ENCODE measurements at regions of chr5 and their contacts with region 1.

Region 1: DNA sequence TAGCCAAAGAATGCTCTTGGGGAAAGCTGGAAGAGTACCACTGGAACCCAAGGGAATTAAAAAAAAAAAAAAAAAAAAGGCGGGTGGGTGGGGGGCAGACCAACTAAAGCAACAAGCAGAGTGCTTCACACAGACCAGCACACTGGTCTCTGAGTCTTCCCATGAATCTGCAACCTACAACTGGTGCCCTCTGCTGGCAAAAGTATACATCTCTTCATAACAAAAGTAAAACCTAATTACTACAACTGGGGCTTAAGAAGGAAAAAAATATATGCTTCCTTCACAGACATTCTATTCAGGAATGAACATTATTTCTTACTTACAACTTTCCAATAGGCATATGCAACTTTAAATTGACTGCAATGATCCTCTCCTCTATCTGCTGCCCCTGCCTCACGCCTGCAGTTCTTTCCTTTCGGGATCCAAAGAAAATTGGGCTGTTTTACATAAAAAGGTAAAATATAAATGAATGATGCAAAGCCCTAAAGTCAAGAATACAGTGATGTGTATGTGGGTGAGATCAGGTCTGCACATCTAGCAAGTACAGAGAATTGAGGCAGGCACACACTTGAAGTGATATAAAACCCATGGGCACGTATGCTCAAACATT is 7.2 kb upstream of the KLHL3 start:
- DNase-seq: no peak
- H3K4me3 ChIP-seq: no peak overlapping the region
- H3K27ac ChIP-seq: no peak overlapping the region
- H3K27me3 ChIP-seq: no peaks in the 10 kb centered on the region
- CTCF ChIP-seq: peak; percentile 75

Region 2: DNA sequence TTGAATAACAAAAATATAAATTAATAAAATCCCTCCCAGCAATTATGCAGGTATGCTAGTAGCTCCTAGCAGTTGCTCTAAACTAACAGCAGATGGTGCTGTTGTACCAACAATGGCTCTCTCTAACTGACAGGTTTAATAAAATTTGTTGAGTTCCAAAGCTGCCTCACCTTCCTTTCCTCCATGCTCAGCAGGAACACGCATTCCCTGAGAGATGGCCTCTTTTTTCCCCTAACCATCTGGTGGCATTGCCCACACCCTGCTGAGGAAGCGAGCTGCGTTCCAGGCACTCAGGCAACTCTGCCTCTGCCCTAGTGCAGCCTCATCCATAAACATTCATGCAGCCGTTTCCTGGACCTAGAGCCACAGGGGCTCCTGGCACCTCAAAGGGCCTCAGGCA is 113.5 kb before region 1 on chr5:
- CTCF ChIA-PET with region 1: interaction called, 271 read pairs
- POLR2A ChIA-PET with region 1: no interaction called
- DNase-seq: no peak
- H3K4me3 ChIP-seq: no peak overlapping the region
- H3K27ac ChIP-seq: no peak overlapping the region
- H3K27me3 ChIP-seq: no peaks in the 10 kb centered on the region
- CTCF ChIP-seq: peak; percentile 88

Region 3: GRCh38 chr5:137641148-137641547 is 102.0 kb before region 1 on chr5:
- CTCF ChIA-PET with region 1: interaction called, 13 read pairs
- POLR2A ChIA-PET with region 1: no interaction called
- DNase-seq: no peak
- H3K4me3 ChIP-seq: no peak overlapping the region
- H3K27ac ChIP-seq: no peak overlapping the region
- H3K27me3 ChIP-seq: no peaks in the 10 kb centered on the region
- CTCF ChIP-seq: no peak

Region 4: GRCh38 chr5:137699336-137700281 is 43.5 kb before region 1 on chr5:
- CTCF ChIA-PET with region 1: interaction called, 19 read pairs
- POLR2A ChIA-PET with region 1: no interaction called
- DNase-seq: no peak
- H3K4me3 ChIP-seq: no peak overlapping the region
- H3K27ac ChIP-seq: no peak overlapping the region
- H3K27me3 ChIP-seq: no peaks in the 10 kb centered on the region
- CTCF ChIP-seq: no peak

Region 5: GRCh38 chr5:137730336-137730735 is 12.8 kb before region 1 on chr5:
- CTCF ChIA-PET with region 1: interaction called, 16 read pairs
- POLR2A ChIA-PET with region 1: no interaction called
- DNase-seq: no peak
- H3K4me3 ChIP-seq: no peak overlapping the region
- H3K27ac ChIP-seq: no peak overlapping the region
- H3K27me3 ChIP-seq: no peaks in the 10 kb centered on the region
- CTCF ChIP-seq: no peak

Region 6: DNA sequence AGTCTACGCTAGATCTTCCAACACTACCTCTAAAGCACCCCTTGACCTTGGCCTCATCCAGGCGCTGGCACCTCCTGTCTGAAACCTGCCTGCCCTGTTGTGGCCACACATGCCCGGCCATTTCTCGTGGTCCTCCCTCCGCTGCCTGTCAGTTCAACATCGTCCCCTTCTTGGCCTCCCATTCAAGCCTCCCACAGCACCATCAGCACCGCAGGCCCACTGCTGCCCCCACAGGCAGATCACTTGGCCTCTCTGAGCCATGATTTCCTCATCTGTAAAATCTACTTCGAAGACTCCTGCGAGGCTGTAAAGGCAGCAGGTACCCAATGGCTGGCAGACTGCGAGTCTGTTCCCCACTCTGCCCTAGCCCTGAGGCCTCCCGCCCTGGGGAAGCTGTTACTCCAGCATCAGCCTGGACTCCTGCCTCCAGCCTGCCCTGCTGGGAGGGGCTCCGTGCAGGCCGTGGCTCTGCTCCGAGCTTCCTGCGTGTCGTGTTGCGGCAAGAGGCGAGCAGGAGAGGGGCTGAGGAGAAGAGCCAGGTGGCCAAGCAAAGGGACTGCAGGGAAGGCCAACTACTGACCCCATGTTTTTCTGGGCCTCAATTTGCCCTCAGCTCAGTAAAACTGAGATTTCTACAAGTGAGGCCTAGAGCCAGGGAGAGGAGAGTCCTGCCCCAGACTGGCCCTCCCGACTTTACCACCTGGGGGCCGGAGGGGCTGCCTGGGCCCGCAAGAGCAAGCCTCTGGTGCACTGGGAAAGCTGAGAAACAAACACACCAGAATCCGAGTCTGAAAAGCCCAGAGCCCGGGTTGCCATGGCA is 1202.5 kb after region 1 on chr5:
- CTCF ChIA-PET with region 1: no interaction called
- POLR2A ChIA-PET with region 1: no interaction called
- DNase-seq: no peak
- H3K4me3 ChIP-seq: no peak overlapping the region
- H3K27ac ChIP-seq: no peak overlapping the region
- H3K27me3 ChIP-seq: no peaks in the 10 kb centered on the region
- CTCF ChIP-seq: peak; percentile 16; the same call in 1 of the 2 replicates

Measured in AG04450 (cell line).